Common myeloid progenitor, CD34-positive (primary cell): ENCODE measurements at regions of chr17 and their contacts with region 1.

Region 1: DNA sequence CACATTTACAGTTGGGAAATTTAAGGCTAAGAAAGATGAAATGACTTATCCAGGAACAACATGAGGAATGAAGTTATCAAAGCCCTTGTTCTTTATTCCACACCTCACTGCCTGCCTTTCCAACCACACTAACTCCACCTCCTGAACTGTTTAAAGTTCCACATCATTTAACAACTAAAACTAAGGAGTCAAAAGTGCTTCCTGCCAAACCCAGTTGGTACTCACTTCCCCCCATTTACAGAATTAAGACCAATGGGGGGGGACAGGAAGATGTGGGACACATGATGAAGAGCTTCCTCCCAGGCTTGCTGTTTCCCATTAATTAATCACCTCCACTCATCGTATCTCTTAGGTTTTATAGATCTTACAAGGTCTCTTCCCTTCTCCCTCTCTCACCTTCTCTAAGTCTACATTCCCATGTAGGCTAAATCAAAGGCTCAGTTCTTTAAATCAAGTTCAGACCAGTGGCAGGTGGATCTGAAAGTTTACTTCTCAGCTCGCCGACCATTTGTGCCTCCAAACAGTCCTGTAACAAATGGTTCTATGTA is 19.2 kb upstream of the TMEM101 start:
- DNase-seq: no peak
- H3K4me3 ChIP-seq: no peak overlapping the region
- H3K27ac ChIP-seq: no peak overlapping the region
- H3K4me1 ChIP-seq: peaks cover 0 to 7% (median 0%) of the 10 kb centered on the region in 4 experiments
- H3K27me3 ChIP-seq: no peaks in the 10 kb centered on the region

Region 2: DNA sequence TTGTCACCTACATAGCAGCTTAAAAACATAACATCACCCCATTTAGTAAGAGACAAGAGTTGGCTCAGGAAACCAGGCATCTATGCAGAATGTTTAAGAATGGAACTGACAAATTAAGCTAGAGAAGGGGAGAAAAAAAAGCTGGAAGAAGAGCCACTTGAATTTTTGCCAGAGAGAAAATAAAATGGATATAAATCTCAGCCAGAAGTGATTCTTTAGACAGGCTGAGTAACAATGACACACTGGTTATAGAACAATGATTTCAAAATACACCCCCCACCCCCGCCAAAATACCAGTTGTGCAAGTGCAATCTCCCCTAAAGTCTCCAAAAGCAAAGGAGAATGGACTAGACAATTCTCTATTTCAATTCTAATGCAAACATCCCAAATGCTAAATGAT is 10.1 kb after region 1 on chr17:
- CTCF ChIA-PET with region 1: interaction called, 15 read pairs
- POLR2A ChIA-PET with region 1: interaction called, 3 read pairs
- DNase-seq: no peak
- H3K4me3 ChIP-seq: no peak overlapping the region
- H3K27ac ChIP-seq: no peak overlapping the region
- H3K4me1 ChIP-seq: peaks cover 0 to 2% (median 0%) of the 10 kb centered on the region in 4 experiments
- H3K27me3 ChIP-seq: no peaks in the 10 kb centered on the region